ENCODE measurements at regions of chr14 and their contacts with region 1.

Region 1: GRCh38 chr14:96567289-96567899 is 65.2 kb downstream of the PAPOLA start:
- DNase-seq: peak; percentile 39
- ATAC-seq: no peak
- H3K4me3 ChIP-seq: no peak overlapping the region
- H3K4me3 Mint-ChIP-seq: no peak overlapping the region
- H3K27ac ChIP-seq: no peak overlapping the region
- H3K27ac Mint-ChIP-seq: no peak overlapping the region
- H3K4me1 ChIP-seq: no peaks in the 10 kb centered on the region
- H3K4me1 Mint-ChIP-seq: peaks cover 3% of the 10 kb centered on the region
- H3K27me3 ChIP-seq: no peaks in the 10 kb centered on the region
- H3K27me3 Mint-ChIP-seq: no peaks in the 10 kb centered on the region
- CTCF ChIP-seq: peak; percentile 73

Region 2: DNA sequence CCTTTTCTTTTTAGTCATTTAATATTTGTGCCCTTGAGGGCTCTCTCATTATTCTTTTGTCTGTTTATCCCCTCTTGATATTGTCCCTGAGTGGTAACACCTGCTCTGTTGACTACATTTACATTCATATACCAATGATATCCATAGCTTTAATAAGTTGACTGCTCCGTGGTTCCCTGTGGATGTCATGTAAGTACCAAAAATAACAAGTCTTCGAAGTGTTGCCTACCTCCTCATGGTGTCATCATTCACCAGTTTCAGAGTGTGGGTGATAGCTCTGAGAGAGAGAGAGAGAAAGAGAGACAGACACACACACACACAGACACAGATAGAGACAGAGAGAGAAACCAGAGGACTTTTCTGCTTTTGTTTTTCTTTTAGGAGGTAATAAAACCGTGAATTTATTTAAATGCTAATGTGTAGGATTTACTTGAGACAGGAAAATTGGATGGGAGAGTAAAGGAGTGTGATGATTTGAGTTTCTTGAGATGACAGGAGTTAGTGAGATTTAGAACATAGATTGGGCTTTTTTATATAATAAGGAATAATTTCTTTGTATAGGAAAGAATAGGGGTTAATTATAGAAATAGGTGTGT is 13.0 kb before region 1 on chr14:
- CTCF ChIA-PET with region 1: interaction called, 19 read pairs
- POLR2A ChIA-PET with region 1: no interaction called
- intact Hi-C with region 1: no loop called
- DNase-seq: no peak
- ATAC-seq: no peak
- H3K4me3 ChIP-seq: no peak overlapping the region
- H3K4me3 Mint-ChIP-seq: no peak overlapping the region
- H3K27ac ChIP-seq: peak overlapping the region in 1 of 2 donors; percentile 5
- H3K27ac Mint-ChIP-seq: no peak overlapping the region
- H3K4me1 ChIP-seq: no peaks in the 10 kb centered on the region
- H3K4me1 Mint-ChIP-seq: no peaks in the 10 kb centered on the region
- H3K27me3 ChIP-seq: no peaks in the 10 kb centered on the region
- H3K27me3 Mint-ChIP-seq: no peaks in the 10 kb centered on the region
- CTCF ChIP-seq: no peak

Region 3: GRCh38 chr14:96741151-96741977 is 174.0 kb after region 1 on chr14:
- CTCF ChIA-PET with region 1: interaction called, 35 read pairs
- POLR2A ChIA-PET with region 1: no interaction called
- intact Hi-C with region 1: loop called (anchors 2 kb)
- DNase-seq: peak; percentile 76
- ATAC-seq: peak; percentile 83
- H3K4me3 ChIP-seq: peak overlapping the region in 4 of 5 experiments; percentile 12 to 42 (median 39)
- H3K4me3 Mint-ChIP-seq: peak overlapping the region; percentile 77
- H3K27ac ChIP-seq: no peak overlapping the region
- H3K27ac Mint-ChIP-seq: no peak overlapping the region
- H3K4me1 ChIP-seq: peaks cover 12 to 18% of the 10 kb centered on the region in 2 donors
- H3K4me1 Mint-ChIP-seq: peaks cover 11% of the 10 kb centered on the region
- H3K27me3 ChIP-seq: peaks cover 0 to 50% (median 20%) of the 10 kb centered on the region in 4 experiments
- H3K27me3 Mint-ChIP-seq: peaks cover 72% of the 10 kb centered on the region
- CTCF ChIP-seq: peak; percentile 91

Region 4: DNA sequence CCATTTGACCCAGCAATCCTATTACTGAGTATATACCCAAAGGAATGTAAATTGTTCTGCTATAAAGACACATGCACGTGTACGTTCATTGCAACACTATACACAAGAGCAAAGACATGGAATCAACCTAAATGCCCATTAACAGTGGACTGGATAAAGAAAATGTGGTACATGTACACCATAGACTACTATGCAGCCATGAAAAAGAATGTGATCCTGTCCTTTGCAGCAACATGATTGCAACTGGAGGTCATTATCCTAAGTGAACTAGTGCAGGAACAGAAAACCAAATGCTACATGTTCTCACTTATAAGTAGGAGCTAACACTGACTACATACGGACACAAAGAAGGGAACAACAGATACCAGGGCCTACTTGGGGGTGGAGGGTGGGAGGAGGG is 184.1 kb after region 1 on chr14:
- CTCF ChIA-PET with region 1: no interaction called
- POLR2A ChIA-PET with region 1: no interaction called
- intact Hi-C with region 1: no loop called
- DNase-seq: no peak
- ATAC-seq: no peak
- H3K4me3 ChIP-seq: no peak overlapping the region
- H3K4me3 Mint-ChIP-seq: no peak overlapping the region
- H3K27ac ChIP-seq: no peak overlapping the region
- H3K27ac Mint-ChIP-seq: no peak overlapping the region
- H3K4me1 ChIP-seq: no peaks in the 10 kb centered on the region
- H3K4me1 Mint-ChIP-seq: no peaks in the 10 kb centered on the region
- H3K27me3 ChIP-seq: peaks cover 0 to 12% (median 0%) of the 10 kb centered on the region in 4 experiments
- H3K27me3 Mint-ChIP-seq: peaks cover 30% of the 10 kb centered on the region
- CTCF ChIP-seq: no peak

Region 5: DNA sequence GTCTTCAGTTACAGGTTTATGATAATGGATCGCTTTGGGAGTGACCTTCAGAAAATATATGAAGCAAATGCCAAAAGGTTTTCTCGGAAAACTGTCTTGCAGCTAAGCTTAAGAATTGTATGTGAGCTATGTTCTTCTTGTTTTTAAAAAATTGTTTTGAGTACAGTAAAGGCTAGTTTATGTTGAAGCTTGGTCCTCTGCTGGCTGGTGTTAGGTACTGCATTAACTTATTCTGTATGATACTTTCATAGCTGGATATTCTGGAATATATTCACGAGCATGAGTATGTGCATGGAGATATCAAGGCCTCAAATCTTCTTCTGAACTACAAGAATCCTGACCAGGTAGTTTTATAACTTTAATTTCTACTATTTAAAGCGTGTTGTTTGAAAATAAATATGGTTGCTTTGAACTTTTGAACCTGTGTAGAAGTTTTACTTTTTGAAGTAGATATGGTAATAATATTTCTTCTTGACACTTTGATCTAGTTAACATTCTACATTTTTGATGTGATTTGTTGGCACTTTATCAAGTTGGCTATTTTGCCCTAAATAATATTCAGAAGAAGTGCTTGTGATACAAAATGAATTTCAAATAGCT is 285.5 kb after region 1 on chr14:
- CTCF ChIA-PET with region 1: interaction called, 12 read pairs
- POLR2A ChIA-PET with region 1: no interaction called
- intact Hi-C with region 1: no loop called
- DNase-seq: peak; percentile 33
- ATAC-seq: no peak
- H3K4me3 ChIP-seq: no peak overlapping the region
- H3K4me3 Mint-ChIP-seq: no peak overlapping the region
- H3K27ac ChIP-seq: no peak overlapping the region
- H3K27ac Mint-ChIP-seq: no peak overlapping the region
- H3K4me1 ChIP-seq: no peaks in the 10 kb centered on the region
- H3K4me1 Mint-ChIP-seq: peaks cover 2% of the 10 kb centered on the region
- H3K27me3 ChIP-seq: no peaks in the 10 kb centered on the region
- H3K27me3 Mint-ChIP-seq: no peaks in the 10 kb centered on the region
- CTCF ChIP-seq: peak; percentile 88

Measured in B cell (primary cell).